Ascending aorta (tissue), 2 donors: ENCODE measurements at regions of chr6 and their contacts with region 1.

Region 1: DNA sequence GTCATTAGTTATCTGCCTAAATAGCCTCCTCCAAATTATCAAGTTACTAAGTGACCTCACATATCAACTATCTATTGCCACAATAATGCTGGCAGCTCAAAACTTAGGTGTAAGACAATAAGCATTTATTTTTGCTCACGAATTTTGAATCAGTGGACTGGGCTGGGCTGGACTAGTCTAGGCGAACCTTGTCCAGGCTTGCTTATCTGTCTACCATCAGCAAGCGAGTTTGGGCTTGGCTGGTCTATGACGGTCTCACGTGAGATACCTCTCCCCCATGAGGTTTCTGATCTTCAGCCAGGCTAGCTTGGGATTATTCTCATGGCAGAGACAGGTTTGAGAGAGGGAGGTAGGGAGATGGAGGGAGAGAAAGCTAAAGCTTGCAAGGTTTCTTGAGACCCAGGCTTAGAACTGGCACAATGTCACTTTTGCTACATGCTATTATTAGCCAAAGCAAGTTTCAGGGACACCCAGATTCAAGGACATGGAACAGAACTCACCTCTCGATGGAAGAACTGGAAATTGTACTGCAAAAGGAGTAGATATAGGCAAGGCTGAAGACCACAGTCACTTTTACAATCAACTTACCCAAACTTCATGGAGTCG is 80.9 kb downstream of the WASF1 start:
- DNase-seq: no peak
- H3K4me3 ChIP-seq: no peak overlapping the region
- H3K27ac ChIP-seq: peak overlapping the region in 1 of 2 donors; percentile 33
- H3K4me1 ChIP-seq: peaks cover 0 to 17% of the 10 kb centered on the region in 2 donors
- H3K27me3 ChIP-seq: no peaks in the 10 kb centered on the region
- CTCF ChIP-seq: no peak

Region 2: DNA sequence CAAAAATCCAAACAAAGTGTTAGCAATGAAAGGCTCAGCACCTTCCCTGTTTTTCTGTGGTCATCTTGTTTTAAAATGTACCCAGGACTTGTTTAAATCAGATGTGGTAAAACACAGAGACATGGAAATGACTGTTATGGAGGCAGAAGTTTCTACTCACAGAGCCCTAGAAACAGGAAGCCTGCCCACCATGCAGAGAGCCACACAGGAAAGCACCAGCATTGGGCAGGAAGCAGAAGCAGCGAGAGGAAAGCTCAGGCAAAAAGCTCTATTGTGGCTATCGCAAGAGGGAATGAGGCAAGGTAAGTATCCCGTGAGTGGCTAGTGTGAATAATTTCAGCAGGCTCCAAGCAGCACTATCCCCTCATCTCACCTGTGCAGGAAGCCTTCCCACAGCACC is 77.7 kb before region 1 on chr6:
- intact Hi-C with region 1: no loop called
- DNase-seq: no peak
- H3K4me3 ChIP-seq: no peak overlapping the region
- H3K27ac ChIP-seq: no peak overlapping the region
- H3K4me1 ChIP-seq: no peaks in the 10 kb centered on the region
- H3K27me3 ChIP-seq: no peaks in the 10 kb centered on the region
- CTCF ChIP-seq: no peak

Region 3: DNA sequence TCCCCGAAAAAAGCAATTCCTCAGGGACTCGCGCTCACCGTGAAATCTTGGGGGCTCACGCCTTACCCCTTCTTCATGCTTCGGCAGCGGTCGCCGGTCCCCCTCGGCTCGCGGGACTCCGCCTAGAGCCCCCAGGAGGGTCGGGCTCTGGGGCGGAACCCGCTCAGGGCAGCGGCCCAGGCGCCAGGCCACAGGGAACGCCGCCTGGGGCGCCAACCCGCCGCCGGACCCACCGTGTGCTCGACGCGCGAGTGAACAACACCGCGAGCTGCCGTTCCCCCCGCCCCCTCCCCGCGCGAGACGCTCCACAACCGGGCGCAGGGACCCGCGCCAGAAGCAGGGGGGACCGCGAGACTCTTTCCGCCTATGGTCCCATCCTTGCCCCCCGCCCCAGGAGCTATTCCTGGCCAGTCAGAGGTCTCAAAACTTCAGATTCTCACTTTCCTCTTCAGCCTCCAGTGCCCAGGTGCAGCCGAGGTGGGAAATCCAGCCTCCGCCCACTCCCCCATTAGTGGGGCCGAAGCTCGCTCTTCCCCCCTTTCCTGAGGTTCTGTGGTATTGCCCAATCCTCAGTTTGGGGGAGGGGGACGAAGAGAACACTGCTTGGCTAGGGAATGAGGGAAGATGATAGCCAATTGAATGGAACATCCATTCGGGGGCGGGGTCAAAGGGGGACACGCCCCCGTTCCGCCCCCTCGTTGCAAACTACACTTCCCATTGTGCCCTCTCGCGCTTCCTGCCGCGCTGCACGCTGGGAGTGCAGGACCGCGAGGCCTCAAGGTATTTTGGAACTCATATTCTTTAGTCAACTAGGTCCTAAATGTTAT is 81.0 kb after region 1 on chr6 and contains the start of gene WASF1:
- intact Hi-C with region 1: loop called (anchors 5 kb)
- DNase-seq: peak; percentile 84 to 98
- H3K4me3 ChIP-seq: peak within 1 kb of the TSS; percentile 85 to 86
- H3K27ac ChIP-seq: peak within 1 kb of the TSS; percentile 81 to 83
- H3K4me1 ChIP-seq: peaks cover 3 to 22% of the 10 kb centered on the region in 2 donors
- H3K27me3 ChIP-seq: no peaks in the 10 kb centered on the region
- CTCF ChIP-seq: peak in 1 of 3 experiments; percentile 13
- total RNA-seq, gene WASF1: 0.53 TPM

Region 4: GRCh38 chr6:110415086-110415916 is 316.7 kb after region 1 on chr6 and contains the start of gene DDO:
- intact Hi-C with region 1: loop called (anchors 10 kb)
- DNase-seq: peak; percentile 84 to 95
- H3K4me3 ChIP-seq: peak within 1 kb of the TSS; percentile 54
- H3K27ac ChIP-seq: peak within 1 kb of the TSS; percentile 79 to 83
- H3K4me1 ChIP-seq: peaks cover 4 to 12% of the 10 kb centered on the region in 2 donors
- H3K27me3 ChIP-seq: no peaks in the 10 kb centered on the region
- CTCF ChIP-seq: no peak
- total RNA-seq, gene DDO: 0.32 TPM